ENCODE measurements at regions of chr10 and their contacts with region 1.

Region 1: GRCh38 chr10:30170824-30171223 is 111.4 kb upstream of the JCAD start:
- DNase-seq: no peak
- H3K4me3 Mint-ChIP-seq: peak overlapping the region; percentile 10
- H3K27ac Mint-ChIP-seq: peak overlapping the region; percentile 43
- H3K4me1 Mint-ChIP-seq: peaks cover 31% of the 10 kb centered on the region
- H3K27me3 Mint-ChIP-seq: peaks cover 22% of the 10 kb centered on the region

Region 2: DNA sequence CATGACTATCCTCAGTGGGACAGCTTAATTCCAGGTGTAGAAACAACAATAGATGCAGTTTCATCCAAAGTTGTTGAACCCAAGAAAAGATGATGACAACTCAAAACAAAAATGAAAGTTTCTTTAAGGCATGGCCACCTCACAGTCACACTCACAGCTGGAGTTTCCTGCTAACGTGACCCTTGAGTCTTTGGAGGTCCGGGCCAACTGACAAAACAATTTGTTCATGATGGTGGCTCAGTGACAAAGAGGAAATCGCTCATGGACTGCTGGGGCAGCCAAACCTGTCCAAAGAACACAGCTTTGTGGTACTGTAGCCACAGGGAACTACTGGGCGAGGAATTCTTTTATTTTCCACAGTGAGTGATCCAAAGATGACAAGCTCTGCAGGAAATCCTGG is 15.4 kb before region 1 on chr10:
- intact Hi-C with region 1: no loop called
- DNase-seq: peak; percentile 18
- H3K4me3 Mint-ChIP-seq: no peak overlapping the region
- H3K27ac Mint-ChIP-seq: peak overlapping the region; percentile 24
- H3K4me1 Mint-ChIP-seq: peaks cover 34% of the 10 kb centered on the region
- H3K27me3 Mint-ChIP-seq: peaks cover 19% of the 10 kb centered on the region

Region 3: GRCh38 chr10:30231071-30231652 is 60.3 kb after region 1 on chr10:
- intact Hi-C with region 1: loop called (anchors 5 kb)
- DNase-seq: peak; percentile 25
- H3K4me3 Mint-ChIP-seq: no peak overlapping the region
- H3K27ac Mint-ChIP-seq: peak overlapping the region; percentile 13
- H3K4me1 Mint-ChIP-seq: peaks cover 42% of the 10 kb centered on the region
- H3K27me3 Mint-ChIP-seq: no peaks in the 10 kb centered on the region

Measured in activated T-helper 2 cell treated with anti-CD3 and anti-CD28 coated beads, Interferon-gamma antibody, Interleukin-2, Interleukin-4, amounts not matched to agents 10 μg/mL and 5 μg/mL and 100 μg/mL, durations not matched to agents 14 hours and 24 hours and 36 hours (primary cell).